Activated T-helper 2 cell treated with anti-CD3 and anti-CD28 coated beads, Interferon-gamma antibody, Interleukin-2, Interleukin-4, amounts not matched to agents 10 μg/mL and 5 μg/mL and 100 μg/mL, durations not matched to agents 14 hours and 24 hours and 36 hours (primary cell): ENCODE measurements at regions of chr17 and their contacts with region 1.

Region 1: GRCh38 chr17:16589097-16589969 is 20.3 kb upstream of the ZNF287 start:
- DNase-seq: peak; percentile 87
- H3K4me3 Mint-ChIP-seq: peak overlapping the region; percentile 66
- H3K27ac Mint-ChIP-seq: no peak overlapping the region
- H3K4me1 Mint-ChIP-seq: peaks cover 5% of the 10 kb centered on the region
- H3K27me3 Mint-ChIP-seq: peaks cover 49% of the 10 kb centered on the region

Region 2: DNA sequence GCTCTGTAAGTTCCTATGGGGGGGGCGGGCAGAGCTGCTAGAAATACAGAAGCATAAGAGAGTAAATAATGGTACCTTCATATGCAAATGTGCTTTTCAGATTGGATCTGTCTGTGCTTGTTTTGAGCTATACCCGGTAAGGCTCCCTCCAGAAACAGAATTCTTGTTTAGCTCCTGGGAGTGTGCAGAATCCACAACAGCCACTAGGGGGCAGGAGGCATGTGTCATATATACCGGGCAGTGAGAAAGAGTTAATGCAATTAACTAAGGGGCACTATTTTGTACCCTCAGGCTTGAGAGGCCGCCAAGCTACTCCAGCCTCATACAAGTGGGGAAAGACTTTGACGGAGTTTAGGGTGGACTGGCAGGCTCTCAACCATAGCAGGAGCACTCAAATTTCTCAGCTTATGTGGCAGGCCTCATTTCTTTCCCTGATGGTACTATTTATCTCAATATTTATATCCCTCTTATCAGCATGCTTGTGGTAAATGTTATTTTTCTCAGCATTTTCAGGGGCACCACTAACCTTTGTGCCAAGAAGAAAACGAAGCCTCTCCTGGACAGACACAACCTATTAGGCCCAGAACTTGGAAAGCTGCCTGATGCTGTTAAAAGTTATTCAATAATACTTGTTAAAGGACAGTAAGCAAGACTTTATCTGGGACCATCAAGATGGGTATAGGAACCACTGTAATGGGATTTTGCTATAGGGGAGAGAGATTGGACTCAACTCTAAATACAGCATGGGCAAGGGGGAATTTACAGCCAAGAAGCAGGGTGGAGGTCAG is 225.4 kb before region 1 on chr17:
- intact Hi-C with region 1: no loop called
- DNase-seq: peak; percentile 61
- H3K4me3 Mint-ChIP-seq: no peak overlapping the region
- H3K27ac Mint-ChIP-seq: no peak overlapping the region
- H3K4me1 Mint-ChIP-seq: peaks cover 4% of the 10 kb centered on the region
- H3K27me3 Mint-ChIP-seq: no peaks in the 10 kb centered on the region

Region 3: GRCh38 chr17:16568541-16569357 is 20.6 kb before region 1 on chr17 and contains the start of gene ZNF287:
- intact Hi-C with region 1: loop called (anchors 2 kb)
- DNase-seq: peak; percentile 90
- H3K4me3 Mint-ChIP-seq: peak within 1 kb of the TSS; percentile 78
- H3K27ac Mint-ChIP-seq: peak within 1 kb of the TSS; percentile 43
- H3K4me1 Mint-ChIP-seq: peaks cover 2% of the 10 kb centered on the region
- H3K27me3 Mint-ChIP-seq: no peaks in the 10 kb centered on the region
- total RNA-seq, gene ZNF287: 6.0 and 7.9 TPM in 2 replicates

Region 4: DNA sequence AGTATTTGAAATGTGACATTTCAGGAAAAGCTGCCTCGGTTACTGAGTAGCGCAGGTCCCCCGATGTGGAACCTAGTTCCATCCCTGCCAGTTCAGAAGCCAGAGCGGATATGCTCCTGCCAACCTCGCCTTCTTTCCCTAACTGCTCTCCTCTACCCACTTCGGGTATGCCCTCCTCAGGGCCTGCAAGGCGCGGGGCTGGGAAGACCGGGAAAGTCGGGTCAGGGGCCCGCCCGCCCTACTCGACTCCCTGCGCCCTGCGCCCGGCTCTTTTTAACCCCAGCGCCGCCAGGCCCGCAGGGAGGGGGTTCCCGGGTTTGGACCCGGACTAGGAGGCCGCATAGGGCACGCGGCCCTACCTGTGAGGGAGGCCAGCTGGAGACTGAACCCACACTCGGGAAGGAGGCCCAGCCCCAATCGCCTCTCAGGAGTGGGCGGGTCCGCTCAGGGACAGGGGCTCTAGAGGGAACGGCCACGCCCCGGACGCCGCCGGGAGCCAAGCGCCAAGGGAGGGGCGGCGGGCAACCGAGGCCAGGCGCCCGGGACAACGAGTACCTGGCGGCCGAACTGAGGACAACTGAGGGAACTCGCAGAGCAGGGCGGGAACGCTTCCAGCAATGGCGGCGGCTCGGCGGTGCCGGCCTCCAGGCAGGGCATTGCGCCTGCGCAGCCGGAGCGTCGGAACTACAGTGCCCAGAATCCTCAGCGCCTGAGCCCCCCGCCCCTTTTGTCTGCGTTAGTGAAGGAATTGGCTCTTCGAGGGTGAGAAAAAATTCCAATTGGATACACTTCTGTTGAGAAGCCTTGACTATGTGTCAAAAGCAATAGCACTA is 64.1 kb after region 1 on chr17 and contains the start of gene ZNF624:
- intact Hi-C with region 1: loop called (anchors 5 kb)
- DNase-seq: peak; percentile 82
- H3K4me3 Mint-ChIP-seq: peak within 1 kb of the TSS; percentile 86
- H3K27ac Mint-ChIP-seq: peak within 1 kb of the TSS; percentile 31
- H3K4me1 Mint-ChIP-seq: peaks cover 11% of the 10 kb centered on the region
- H3K27me3 Mint-ChIP-seq: peaks cover 10% of the 10 kb centered on the region
- total RNA-seq, gene ZNF624: 2.8 and 4.9 TPM in 2 replicates

Region 5: GRCh38 chr17:16915752-16916556 is 326.6 kb after region 1 on chr17:
- intact Hi-C with region 1: no loop called
- DNase-seq: no peak
- H3K4me3 Mint-ChIP-seq: no peak overlapping the region
- H3K27ac Mint-ChIP-seq: no peak overlapping the region
- H3K4me1 Mint-ChIP-seq: no peaks in the 10 kb centered on the region
- H3K27me3 Mint-ChIP-seq: peaks cover 24% of the 10 kb centered on the region